Keratinocyte (primary cell): ENCODE measurements at regions of chr6 and their contacts with region 1.

Region 1: GRCh38 chr6:99868074-99868702 is 125.8 kb downstream of the MCHR2 start:
- DNase-seq: no peak
- H3K4me3 ChIP-seq: no peak overlapping the region
- H3K27ac ChIP-seq: no peak overlapping the region
- H3K4me1 ChIP-seq: no peaks in the 10 kb centered on the region
- H3K27me3 ChIP-seq: peaks cover 14% of the 10 kb centered on the region
- CTCF ChIP-seq: peak; percentile 80 to 93 (median 90)

Region 2: GRCh38 chr6:100099189-100100074 is 231.2 kb after region 1 on chr6:
- dilution Hi-C with region 1: loop called (anchors 25 kb)
- DNase-seq: no peak
- H3K4me3 ChIP-seq: no peak overlapping the region
- H3K27ac ChIP-seq: no peak overlapping the region
- H3K4me1 ChIP-seq: no peaks in the 10 kb centered on the region
- H3K27me3 ChIP-seq: no peaks in the 10 kb centered on the region
- CTCF ChIP-seq: peak in 2 of 3 experiments; percentile 15 to 33